Caco-2 (cell line): ENCODE measurements at regions of chr12 and their contacts with region 1.

Region 1: DNA sequence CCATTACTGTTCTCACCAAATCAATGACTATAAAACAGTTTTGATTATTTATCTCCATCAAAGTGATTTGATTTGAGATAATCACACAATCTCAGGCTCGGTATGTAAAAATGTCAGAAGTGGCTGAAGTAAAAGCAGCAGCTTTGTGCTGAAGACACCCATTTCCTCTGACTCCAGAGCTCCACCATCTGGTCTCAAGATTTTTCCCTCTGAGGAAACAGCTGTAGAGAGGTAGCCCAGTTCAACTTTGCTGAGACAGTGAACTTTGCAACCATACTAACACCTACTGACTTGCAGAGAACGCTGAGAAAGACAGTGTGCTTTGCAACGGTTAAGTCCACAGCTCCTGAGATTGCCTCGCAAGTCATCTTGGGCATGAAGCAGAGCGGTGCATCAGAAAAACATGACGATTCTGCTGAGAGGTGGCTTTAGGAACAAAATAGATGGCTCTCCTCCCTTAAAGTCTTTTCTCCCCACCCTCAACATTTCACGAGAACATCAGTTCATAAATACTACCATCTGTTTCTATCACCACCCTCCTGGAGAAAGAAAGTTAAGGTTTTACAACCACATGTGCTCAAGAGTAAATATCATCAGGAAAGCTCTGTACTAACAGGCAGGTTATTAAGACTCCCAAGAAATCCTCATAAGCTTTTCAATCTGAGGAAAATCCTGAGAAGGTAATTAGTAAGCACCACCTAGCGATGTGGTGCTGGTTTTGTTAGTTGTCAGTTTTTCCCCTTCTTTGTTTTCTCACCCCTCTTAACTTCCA is 34.8 kb downstream of the HIGD1C start:
- DNase-seq: peak; percentile 71 to 78
- H3K4me3 ChIP-seq: no peak overlapping the region
- H3K4me3 Mint-ChIP-seq: no peak overlapping the region
- H3K27ac Mint-ChIP-seq: no peak overlapping the region
- H3K4me1 ChIP-seq: no peaks in the 10 kb centered on the region
- H3K4me1 Mint-ChIP-seq: peaks cover 16% of the 10 kb centered on the region
- H3K27me3 ChIP-seq: no peaks in the 10 kb centered on the region
- H3K27me3 Mint-ChIP-seq: no peaks in the 10 kb centered on the region
- CTCF ChIP-seq: peak; percentile 63 to 83

Region 2: DNA sequence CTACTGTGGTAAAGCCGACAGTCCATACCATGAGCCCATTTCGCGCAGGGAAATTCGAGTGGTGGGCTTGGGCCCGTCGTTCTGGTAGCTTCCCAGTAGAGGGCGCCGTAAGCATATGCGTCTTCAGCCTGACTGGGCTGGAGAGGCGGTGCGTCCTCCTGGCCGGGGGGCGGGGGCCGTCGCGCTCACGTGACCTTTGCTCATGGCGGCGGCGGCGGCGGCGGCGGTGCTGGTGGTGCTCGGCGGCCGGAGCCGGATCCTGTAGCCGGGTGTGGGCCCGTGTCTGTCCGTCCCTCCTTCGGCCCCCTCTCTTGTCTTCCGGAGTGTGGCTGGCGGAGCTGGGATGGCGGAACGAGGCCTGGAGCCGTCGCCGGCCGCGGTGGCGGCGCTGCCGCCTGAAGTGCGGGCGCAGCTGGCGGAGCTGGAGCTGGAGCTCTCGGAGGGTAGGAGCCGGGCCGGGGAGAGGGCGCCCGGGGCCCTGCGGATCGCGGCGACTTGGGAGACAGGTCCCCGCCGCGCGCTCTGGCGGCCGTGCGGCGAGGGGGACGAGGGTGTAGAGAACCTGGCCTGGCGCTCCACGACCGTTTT is 482.3 kb before region 1 on chr12 and contains the start of gene DIP2B:
- CTCF ChIA-PET with region 1: no interaction called
- POLR2A ChIA-PET with region 1: no interaction called
- intact Hi-C with region 1: loop called (anchors 5 kb)
- DNase-seq: peak; percentile 96 to 99
- H3K4me3 ChIP-seq: peak within 1 kb of the TSS; percentile 96
- H3K4me3 Mint-ChIP-seq: peak within 1 kb of the TSS; percentile 89
- H3K27ac Mint-ChIP-seq: peak within 1 kb of the TSS; percentile 79
- H3K4me1 ChIP-seq: peaks cover 32% of the 10 kb centered on the region
- H3K4me1 Mint-ChIP-seq: peaks cover 19% of the 10 kb centered on the region
- H3K27me3 ChIP-seq: no peaks in the 10 kb centered on the region
- H3K27me3 Mint-ChIP-seq: no peaks in the 10 kb centered on the region
- CTCF ChIP-seq: peak; percentile 95 to 96
- total RNA-seq, gene DIP2B: 32.7 and 34.2 TPM in 2 replicates

Region 3: DNA sequence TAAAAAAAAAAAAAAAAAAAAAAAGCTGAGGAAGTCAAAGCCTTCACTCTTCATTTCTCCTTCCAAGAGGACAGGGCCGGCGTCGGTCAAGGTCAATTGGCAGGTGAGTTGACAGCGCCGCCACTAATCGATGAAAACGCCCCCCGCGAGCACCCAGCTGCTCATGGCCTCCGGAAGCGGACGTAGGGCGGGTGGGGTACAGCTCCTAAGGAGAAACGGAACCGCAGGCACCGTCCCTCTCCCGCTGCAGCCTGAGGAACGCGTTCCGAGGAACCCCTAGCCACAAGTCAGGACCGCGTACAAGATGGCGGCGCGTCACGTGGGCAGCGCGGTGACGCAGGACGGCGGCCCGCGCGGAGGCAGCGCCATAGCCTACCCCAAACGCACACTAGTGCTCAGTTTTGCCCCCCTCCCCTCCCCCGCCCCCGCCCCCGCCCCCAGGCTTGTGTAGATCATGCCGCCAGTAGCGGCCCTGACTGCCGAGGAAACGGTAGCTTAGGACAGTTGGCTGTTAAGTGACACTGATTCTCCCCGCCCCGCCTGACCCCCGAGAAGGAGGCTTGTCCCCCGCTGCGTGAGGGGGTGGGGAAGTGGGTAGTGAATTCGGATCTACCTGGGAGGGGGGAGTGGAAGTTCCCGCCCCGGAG is 223.4 kb before region 1 on chr12 and contains the start of gene ATF1:
- CTCF ChIA-PET with region 1: interaction called, 27 read pairs
- POLR2A ChIA-PET with region 1: interaction called, 4 read pairs
- intact Hi-C with region 1: loop called (anchors 1 kb)
- DNase-seq: peak; percentile 94 to 95
- H3K4me3 ChIP-seq: peak within 1 kb of the TSS; percentile 75
- H3K4me3 Mint-ChIP-seq: peak within 1 kb of the TSS; percentile 83
- H3K27ac Mint-ChIP-seq: peak within 1 kb of the TSS; percentile 95
- H3K4me1 ChIP-seq: peaks cover 22% of the 10 kb centered on the region
- H3K4me1 Mint-ChIP-seq: peaks cover 27% of the 10 kb centered on the region
- H3K27me3 ChIP-seq: no peaks in the 10 kb centered on the region
- H3K27me3 Mint-ChIP-seq: no peaks in the 10 kb centered on the region
- CTCF ChIP-seq: no peak
- total RNA-seq, gene ATF1: 47.0 and 54.4 TPM in 2 replicates

Region 4: GRCh38 chr12:50825372-50825838 is 161.7 kb before region 1 on chr12:
- CTCF ChIA-PET with region 1: interaction called, 88 read pairs
- POLR2A ChIA-PET with region 1: no interaction called
- intact Hi-C with region 1: loop called (anchors 1 kb)
- DNase-seq: peak in 1 of 2 experiments; percentile 51
- H3K4me3 ChIP-seq: no peak overlapping the region
- H3K4me3 Mint-ChIP-seq: peak overlapping the region; percentile 10
- H3K27ac Mint-ChIP-seq: peak overlapping the region; percentile 9
- H3K4me1 ChIP-seq: no peaks in the 10 kb centered on the region
- H3K4me1 Mint-ChIP-seq: no peaks in the 10 kb centered on the region
- H3K27me3 ChIP-seq: no peaks in the 10 kb centered on the region
- H3K27me3 Mint-ChIP-seq: no peaks in the 10 kb centered on the region
- CTCF ChIP-seq: peak; percentile 46 to 57

Region 5: DNA sequence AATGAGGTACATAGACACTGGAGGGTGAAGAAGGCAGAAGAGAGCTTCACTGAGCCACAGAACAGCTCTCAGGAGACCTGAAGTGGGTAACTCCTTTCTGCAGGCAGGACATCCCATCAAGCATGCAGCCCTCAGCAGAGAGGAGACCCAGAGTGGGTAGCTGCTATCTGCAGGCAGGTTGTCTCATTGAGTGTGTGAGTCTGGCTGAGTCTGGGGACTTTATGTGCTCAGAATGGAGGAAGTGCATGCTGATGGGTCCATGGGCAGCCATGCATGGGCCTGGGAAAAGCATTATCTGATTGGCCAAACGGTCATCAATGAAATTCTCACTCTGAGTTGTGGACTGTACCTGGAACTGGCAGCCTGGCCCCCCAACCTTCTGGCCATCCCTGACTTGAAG is 49.5 kb before region 1 on chr12:
- CTCF ChIA-PET with region 1: no interaction called
- POLR2A ChIA-PET with region 1: no interaction called
- intact Hi-C with region 1: no loop called
- DNase-seq: no peak
- H3K4me3 ChIP-seq: no peak overlapping the region
- H3K4me3 Mint-ChIP-seq: no peak overlapping the region
- H3K27ac Mint-ChIP-seq: no peak overlapping the region
- H3K4me1 ChIP-seq: peaks cover 31% of the 10 kb centered on the region
- H3K4me1 Mint-ChIP-seq: peaks cover 35% of the 10 kb centered on the region
- H3K27me3 ChIP-seq: no peaks in the 10 kb centered on the region
- H3K27me3 Mint-ChIP-seq: no peaks in the 10 kb centered on the region
- CTCF ChIP-seq: no peak

Region 6: DNA sequence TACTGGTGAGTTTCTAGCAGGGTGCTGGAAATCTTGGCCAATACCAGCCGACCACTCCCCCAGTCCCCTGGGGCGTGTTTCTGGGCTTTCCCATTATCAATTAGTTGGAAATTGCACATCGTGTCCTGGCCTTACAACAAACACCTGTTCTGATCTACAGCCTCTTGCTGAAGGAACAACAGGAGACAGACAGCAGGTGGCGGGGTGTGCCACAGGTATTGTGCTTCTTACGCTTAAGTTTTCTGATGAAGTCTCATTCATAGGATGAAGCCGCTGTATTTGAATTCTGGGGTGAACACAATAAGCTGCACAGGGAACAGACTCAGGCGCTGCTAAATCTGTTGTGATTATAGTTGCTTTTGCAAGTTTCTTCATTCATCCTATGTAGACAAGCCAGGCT is 34.1 kb before region 1 on chr12:
- CTCF ChIA-PET with region 1: interaction called, 4 read pairs
- POLR2A ChIA-PET with region 1: no interaction called
- intact Hi-C with region 1: loop called (anchors 1 kb)
- DNase-seq: peak in 1 of 2 experiments; percentile 51
- H3K4me3 ChIP-seq: no peak overlapping the region
- H3K4me3 Mint-ChIP-seq: no peak overlapping the region
- H3K27ac Mint-ChIP-seq: no peak overlapping the region
- H3K4me1 ChIP-seq: no peaks in the 10 kb centered on the region
- H3K4me1 Mint-ChIP-seq: no peaks in the 10 kb centered on the region
- H3K27me3 ChIP-seq: no peaks in the 10 kb centered on the region
- H3K27me3 Mint-ChIP-seq: no peaks in the 10 kb centered on the region
- CTCF ChIP-seq: peak; percentile 42 to 47

Region 7: GRCh38 chr12:50960130-50960529 is 27.0 kb before region 1 on chr12:
- CTCF ChIA-PET with region 1: no interaction called
- POLR2A ChIA-PET with region 1: no interaction called
- intact Hi-C with region 1: loop called (anchors 2 kb)
- DNase-seq: no peak
- H3K4me3 ChIP-seq: no peak overlapping the region
- H3K4me3 Mint-ChIP-seq: no peak overlapping the region
- H3K27ac Mint-ChIP-seq: no peak overlapping the region
- H3K4me1 ChIP-seq: peaks cover 26% of the 10 kb centered on the region
- H3K4me1 Mint-ChIP-seq: peaks cover 26% of the 10 kb centered on the region
- H3K27me3 ChIP-seq: no peaks in the 10 kb centered on the region
- H3K27me3 Mint-ChIP-seq: no peaks in the 10 kb centered on the region
- CTCF ChIP-seq: no peak

Region 8: GRCh38 chr12:51351913-51352532 is 364.9 kb after region 1 on chr12:
- CTCF ChIA-PET with region 1: no interaction called
- POLR2A ChIA-PET with region 1: no interaction called
- intact Hi-C with region 1: loop called (anchors 5 kb)
- DNase-seq: peak; percentile 52 to 65
- H3K4me3 ChIP-seq: no peak overlapping the region
- H3K4me3 Mint-ChIP-seq: no peak overlapping the region
- H3K27ac Mint-ChIP-seq: no peak overlapping the region
- H3K4me1 ChIP-seq: 0 out of 2 replicates have a peak, but pooled peaks cover 10% of the 10 kb centered on the region
- H3K4me1 Mint-ChIP-seq: peaks cover 11% of the 10 kb centered on the region
- H3K27me3 ChIP-seq: no peaks in the 10 kb centered on the region
- H3K27me3 Mint-ChIP-seq: no peaks in the 10 kb centered on the region
- CTCF ChIP-seq: peak; percentile 64 to 65